ENCODE measurements at regions of chr12 and their contacts with region 1.

Region 1: DNA sequence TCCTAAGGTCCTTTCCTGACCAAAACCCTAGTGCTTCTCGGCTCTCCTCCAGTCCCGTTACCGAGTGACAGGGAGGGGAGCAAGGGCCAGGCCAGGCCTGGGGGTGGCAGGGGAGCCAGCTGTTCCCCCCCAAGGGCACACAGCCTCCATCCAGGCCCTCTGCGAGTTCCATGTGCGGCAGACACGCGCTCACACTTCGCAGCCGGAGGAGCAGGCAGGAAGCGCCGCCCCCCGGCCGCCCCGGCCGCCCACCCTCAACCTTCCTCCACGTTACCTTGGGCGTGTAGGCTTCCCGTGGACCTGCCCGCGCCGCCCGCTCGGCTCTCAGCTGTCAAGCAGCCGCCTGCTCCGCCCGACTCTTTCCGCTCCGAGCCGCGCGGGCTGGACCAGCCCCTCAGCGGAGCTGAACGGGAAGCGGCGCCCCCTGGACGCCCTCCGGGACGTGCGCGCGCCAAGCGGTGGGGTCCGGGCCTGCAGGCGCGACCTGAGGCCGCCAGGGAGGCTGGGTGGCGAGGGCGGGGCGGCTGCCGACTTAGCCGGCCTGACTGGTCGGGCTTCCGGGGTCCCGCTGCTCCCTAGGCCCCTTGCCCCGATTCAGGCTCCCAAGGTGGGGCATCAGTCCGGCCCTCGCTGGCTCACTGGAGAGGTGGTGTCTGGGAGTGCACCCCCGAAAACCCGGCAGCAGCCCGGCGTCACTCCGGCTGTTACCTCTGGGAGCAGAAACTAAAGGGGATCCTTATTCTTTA is at the start of gene CRACR2A:
- DNase-seq: peak; percentile 79
- H3K4me3 Mint-ChIP-seq: peak within 1 kb of the TSS; percentile 94
- H3K27ac Mint-ChIP-seq: peak within 1 kb of the TSS; percentile 98
- H3K4me1 Mint-ChIP-seq: peaks cover 57% of the 10 kb centered on the region
- H3K27me3 Mint-ChIP-seq: no peaks in the 10 kb centered on the region
- total RNA-seq, gene CRACR2A: 28.0 and 30.0 TPM in 2 replicates

Region 2: GRCh38 chr12:3658327-3659163 is 94.4 kb before region 1 on chr12:
- intact Hi-C with region 1: loop called (anchors 1 kb)
- DNase-seq: no peak
- H3K4me3 Mint-ChIP-seq: no peak overlapping the region
- H3K27ac Mint-ChIP-seq: peak overlapping the region; percentile 13
- H3K4me1 Mint-ChIP-seq: no peaks in the 10 kb centered on the region
- H3K27me3 Mint-ChIP-seq: no peaks in the 10 kb centered on the region

Region 3: DNA sequence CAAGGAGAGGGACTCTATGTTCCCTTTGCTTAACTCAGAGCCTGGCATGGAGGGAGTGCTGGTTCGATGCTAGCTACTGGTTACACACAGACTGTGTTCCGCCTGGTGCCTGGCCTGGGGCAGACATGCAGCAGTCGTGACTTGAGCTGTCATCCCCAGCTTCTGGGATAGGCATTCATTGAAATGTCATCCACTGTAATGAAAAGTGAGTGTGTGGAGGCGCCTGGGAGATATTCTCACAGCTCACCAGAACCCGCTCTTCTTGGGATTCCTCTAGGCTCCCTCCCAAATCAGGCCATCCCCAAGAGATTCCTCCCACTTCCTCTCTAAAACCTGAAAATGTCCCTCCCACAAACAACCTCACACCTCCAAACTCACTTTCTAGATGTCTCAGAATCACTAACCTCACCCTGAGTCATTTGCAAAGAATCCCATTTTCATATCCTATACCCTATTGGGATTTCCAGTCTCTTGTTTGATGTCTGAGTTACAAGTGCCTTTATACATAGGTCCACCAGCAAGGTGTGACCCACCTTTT is 82.8 kb before region 1 on chr12:
- intact Hi-C with region 1: loop called (anchors 2 kb)
- DNase-seq: no peak
- H3K4me3 Mint-ChIP-seq: peak overlapping the region; percentile 32
- H3K27ac Mint-ChIP-seq: peak overlapping the region; percentile 68
- H3K4me1 Mint-ChIP-seq: peaks cover 24% of the 10 kb centered on the region
- H3K27me3 Mint-ChIP-seq: no peaks in the 10 kb centered on the region

Region 4: DNA sequence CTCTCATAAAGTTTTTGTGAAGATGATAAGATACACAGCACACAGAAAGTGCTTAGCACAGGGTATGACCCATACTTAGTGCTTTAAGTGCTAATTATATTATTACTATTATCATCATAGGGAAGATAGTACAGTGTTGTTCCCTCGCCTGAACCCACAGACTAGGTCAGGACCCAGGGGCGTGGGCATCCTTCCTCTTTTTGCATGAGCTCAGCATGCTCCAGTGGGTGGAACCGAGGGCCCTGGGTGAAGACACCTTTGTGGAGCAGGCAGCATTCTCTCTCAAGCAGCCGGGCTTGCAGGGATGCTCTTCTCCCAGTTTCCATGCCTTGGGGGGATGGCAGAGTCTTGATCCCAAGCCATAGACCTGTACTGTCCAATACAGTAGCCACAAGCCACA is 34.8 kb before region 1 on chr12:
- intact Hi-C with region 1: loop called (anchors 5 kb)
- DNase-seq: no peak
- H3K4me3 Mint-ChIP-seq: no peak overlapping the region
- H3K27ac Mint-ChIP-seq: no peak overlapping the region
- H3K4me1 Mint-ChIP-seq: peaks cover 6% of the 10 kb centered on the region
- H3K27me3 Mint-ChIP-seq: no peaks in the 10 kb centered on the region

Region 5: DNA sequence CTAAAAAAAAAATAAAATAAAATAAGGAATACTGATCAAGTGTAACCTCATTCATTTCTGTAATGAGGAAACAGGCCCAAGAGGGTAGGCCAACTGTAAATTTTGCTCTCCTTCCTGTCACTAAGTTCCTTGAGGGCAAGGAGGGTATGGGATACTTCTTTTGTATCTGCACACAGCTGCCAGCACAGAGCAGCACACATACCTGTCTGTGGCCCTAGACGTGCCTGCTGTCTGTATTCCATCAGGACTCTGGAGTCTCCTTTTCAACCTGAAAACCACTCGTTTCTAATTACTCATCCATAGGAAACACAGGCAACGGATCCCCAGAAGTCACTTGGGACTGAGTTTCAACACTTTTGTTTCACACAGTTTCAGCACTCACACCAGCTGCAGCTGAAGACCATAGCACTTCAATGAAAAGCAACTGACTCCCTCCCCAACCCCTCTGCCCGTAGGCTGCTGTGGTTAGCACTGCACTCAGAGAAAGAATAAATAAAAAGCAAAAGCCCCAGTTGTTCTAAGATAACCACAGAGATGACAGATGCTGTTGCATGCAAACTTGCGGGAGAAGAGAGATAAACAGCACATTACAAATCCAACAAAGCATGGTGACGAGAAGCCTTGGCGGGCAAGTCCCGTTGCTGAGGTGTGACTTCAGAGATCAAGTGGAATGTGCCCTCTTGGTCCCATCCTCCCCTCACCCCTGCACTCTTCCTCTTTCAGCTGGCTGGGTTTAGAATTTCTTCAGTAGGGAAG is 24.9 kb before region 1 on chr12:
- intact Hi-C with region 1: loop called (anchors 1 kb)
- DNase-seq: peak; percentile 69
- H3K4me3 Mint-ChIP-seq: peak overlapping the region; percentile 83
- H3K27ac Mint-ChIP-seq: peak overlapping the region; percentile 95
- H3K4me1 Mint-ChIP-seq: peaks cover 46% of the 10 kb centered on the region
- H3K27me3 Mint-ChIP-seq: no peaks in the 10 kb centered on the region

Region 6: DNA sequence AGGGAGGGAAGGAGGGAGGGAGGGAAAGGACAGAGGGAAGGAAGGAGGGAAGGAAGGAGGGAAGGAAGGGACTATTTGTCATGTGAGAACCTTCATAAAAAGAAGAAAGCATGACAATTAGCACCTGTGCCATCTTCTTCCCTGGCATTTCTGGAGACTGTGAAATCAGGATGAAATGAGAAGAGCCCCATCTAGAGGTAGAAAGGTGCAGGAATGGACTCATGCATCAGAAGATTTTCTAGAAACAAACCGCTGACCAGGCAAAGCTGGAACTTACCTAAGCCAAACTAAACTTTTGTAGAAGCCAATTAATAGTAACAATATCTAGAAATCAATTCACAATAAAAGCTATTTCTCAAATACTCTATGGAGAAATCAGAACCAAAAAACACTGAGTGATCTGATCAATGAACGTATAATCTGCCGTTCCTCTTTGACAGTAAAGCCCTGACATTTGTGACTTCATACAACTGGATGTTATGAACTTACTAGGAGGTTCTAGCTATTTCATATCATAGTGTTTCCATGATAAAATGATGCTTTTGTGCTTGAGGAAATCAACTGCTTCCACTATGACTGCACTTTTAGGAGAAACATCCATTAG is 24.4 kb after region 1 on chr12:
- intact Hi-C with region 1: loop called (anchors 1 kb)
- DNase-seq: no peak
- H3K4me3 Mint-ChIP-seq: no peak overlapping the region
- H3K27ac Mint-ChIP-seq: no peak overlapping the region
- H3K4me1 Mint-ChIP-seq: peaks cover 5% of the 10 kb centered on the region
- H3K27me3 Mint-ChIP-seq: no peaks in the 10 kb centered on the region

Region 7: DNA sequence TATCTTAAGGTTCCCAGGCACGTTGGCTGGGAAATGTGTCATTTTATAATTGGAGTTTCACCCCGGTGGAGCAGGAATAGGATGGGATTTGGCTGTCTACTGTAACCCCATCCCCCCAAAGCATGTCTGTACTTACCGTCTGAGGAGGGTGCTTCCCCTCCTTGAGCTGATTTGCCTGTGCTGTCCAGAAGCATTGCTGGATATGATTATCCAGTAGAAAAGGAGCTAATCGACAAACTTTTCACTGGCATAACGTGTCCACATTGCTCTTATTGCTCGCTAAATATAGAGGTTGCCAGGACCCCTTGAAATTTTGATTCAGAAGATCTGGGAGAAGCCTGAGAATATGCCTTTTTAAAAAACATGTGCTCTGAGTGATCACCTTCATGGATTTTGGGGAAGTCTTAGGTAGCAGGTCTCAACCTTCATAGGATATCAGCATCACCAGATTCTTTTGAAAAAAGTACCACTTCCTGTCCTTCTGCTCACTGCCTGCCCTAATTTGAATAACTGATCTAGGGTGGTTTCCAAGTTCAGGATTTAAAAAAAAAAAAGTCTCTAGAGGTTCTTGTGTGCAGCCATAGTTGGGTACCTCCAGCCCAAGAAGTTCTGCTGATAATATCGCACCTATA is 1076.4 kb after region 1 on chr12:
- intact Hi-C with region 1: loop called (anchors 10 kb)
- DNase-seq: no peak
- H3K4me3 Mint-ChIP-seq: peak overlapping the region; percentile 83
- H3K27ac Mint-ChIP-seq: peak overlapping the region; percentile 99
- H3K4me1 Mint-ChIP-seq: peaks cover 71% of the 10 kb centered on the region
- H3K27me3 Mint-ChIP-seq: no peaks in the 10 kb centered on the region